Activated CD4-positive, alpha-beta T cell treated with anti-CD3 and anti-CD28 coated beads, Interleukin-2, amount 10 ng/mL, durations not matched to agents 24 days and 14 days (primary cell): ENCODE measurements at regions of chr11 and their contacts with region 1.

Region 1: GRCh38 chr11:65859200-65859811 is 927 bp upstream of the MUS81 start:
- DNase-seq: peak; percentile 99
- H3K4me3 Mint-ChIP-seq: peak overlapping the region; percentile 92
- H3K27ac Mint-ChIP-seq: peak overlapping the region; percentile 94
- H3K4me1 Mint-ChIP-seq: peaks cover 43% of the 10 kb centered on the region
- H3K27me3 Mint-ChIP-seq: no peaks in the 10 kb centered on the region

Region 2: DNA sequence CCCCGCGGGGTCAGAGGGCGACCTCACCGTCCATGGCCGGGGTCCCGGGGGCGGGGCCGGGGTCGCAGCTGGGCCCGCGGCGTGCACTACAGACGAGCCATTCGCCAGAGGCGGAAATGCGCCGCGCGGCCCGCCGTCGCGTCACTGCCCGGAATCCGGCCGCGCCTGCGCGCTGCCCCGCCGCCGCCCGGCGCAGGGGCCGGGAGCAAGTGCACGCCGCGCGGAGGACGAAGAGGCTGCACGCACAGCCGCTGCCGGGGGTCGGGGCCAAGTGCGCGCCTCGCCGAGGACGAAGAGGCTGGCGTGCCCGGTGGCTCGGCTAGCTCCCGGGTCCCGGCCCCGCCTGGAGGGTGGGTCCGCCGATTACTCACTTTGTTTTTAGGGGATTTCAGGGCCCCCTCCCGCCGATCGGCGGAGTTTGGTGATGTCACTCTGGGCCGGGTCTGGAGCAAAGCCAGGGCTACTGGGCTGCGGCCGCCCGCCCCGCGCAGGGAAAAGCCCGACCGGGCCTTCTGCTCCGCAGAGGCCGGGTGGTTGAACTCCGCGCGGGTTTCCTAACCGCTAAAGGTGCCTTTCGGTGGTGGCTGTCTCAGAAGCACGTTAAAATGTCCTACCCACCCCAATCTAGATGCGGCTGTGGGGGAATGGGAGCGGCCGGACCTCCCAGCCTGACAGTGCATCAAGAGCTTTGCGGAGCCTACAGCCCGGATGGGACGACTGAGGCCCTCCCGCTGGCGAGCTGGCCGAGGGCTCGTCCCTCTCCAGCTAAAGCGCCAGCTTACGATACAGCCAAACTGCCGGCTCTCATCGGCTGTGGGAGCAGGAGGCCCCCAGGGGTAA is 196.3 kb before region 1 on chr11 and contains the start of gene RELA:
- intact Hi-C with region 1: loop called (anchors 2 kb)
- DNase-seq: peak; percentile 97
- H3K4me3 Mint-ChIP-seq: peak within 1 kb of the TSS; percentile 92
- H3K27ac Mint-ChIP-seq: peak within 1 kb of the TSS; percentile 93
- H3K4me1 Mint-ChIP-seq: peaks cover 24% of the 10 kb centered on the region
- H3K27me3 Mint-ChIP-seq: no peaks in the 10 kb centered on the region
- total RNA-seq, gene RELA: 95.7 and 98.2 TPM in 2 replicates

Region 3: GRCh38 chr11:65720237-65720934 is 138.9 kb before region 1 on chr11 and contains the start of gene RNASEH2C:
- intact Hi-C with region 1: no loop called
- DNase-seq: peak; percentile 94
- H3K4me3 Mint-ChIP-seq: peak within 1 kb of the TSS; percentile 97
- H3K27ac Mint-ChIP-seq: peak within 1 kb of the TSS; percentile 96
- H3K4me1 Mint-ChIP-seq: peaks cover 25% of the 10 kb centered on the region
- H3K27me3 Mint-ChIP-seq: peaks cover 4% of the 10 kb centered on the region
- total RNA-seq, gene RNASEH2C: 86.4 and 100.0 TPM in 2 replicates

Region 4: GRCh38 chr11:65833297-65834030 is 25.8 kb before region 1 on chr11 and contains the start of gene SNX32:
- intact Hi-C with region 1: loop called (anchors 1 kb)
- DNase-seq: peak; percentile 99
- H3K4me3 Mint-ChIP-seq: no peak within 1 kb of the TSS
- H3K27ac Mint-ChIP-seq: no peak within 1 kb of the TSS
- H3K4me1 Mint-ChIP-seq: peaks cover 21% of the 10 kb centered on the region
- H3K27me3 Mint-ChIP-seq: peaks cover 20% of the 10 kb centered on the region
- total RNA-seq, gene SNX32: 1.2 and 2.1 TPM in 2 replicates

Region 5: GRCh38 chr11:65888163-65888814 is 29.0 kb after region 1 on chr11 and contains the start of gene FIBP:
- intact Hi-C with region 1: loop called (anchors 1 kb)
- DNase-seq: peak; percentile 98
- H3K4me3 Mint-ChIP-seq: peak within 1 kb of the TSS; percentile 95
- H3K27ac Mint-ChIP-seq: peak within 1 kb of the TSS; percentile 98
- H3K4me1 Mint-ChIP-seq: peaks cover 51% of the 10 kb centered on the region
- H3K27me3 Mint-ChIP-seq: no peaks in the 10 kb centered on the region
- total RNA-seq, gene FIBP: 91.0 and 95.7 TPM in 2 replicates

Region 6: GRCh38 chr11:65919146-65920033 is 60.1 kb after region 1 on chr11 and contains the start of gene DRAP1:
- intact Hi-C with region 1: loop called (anchors 1 kb)
- DNase-seq: peak; percentile 99
- H3K4me3 Mint-ChIP-seq: peak within 1 kb of the TSS; percentile 96
- H3K27ac Mint-ChIP-seq: peak within 1 kb of the TSS; percentile 90
- H3K4me1 Mint-ChIP-seq: peaks cover 25% of the 10 kb centered on the region
- H3K27me3 Mint-ChIP-seq: no peaks in the 10 kb centered on the region
- total RNA-seq, gene DRAP1: 113 and 117 TPM in 2 replicates

Region 7: GRCh38 chr11:65988791-65989592 is 129.7 kb after region 1 on chr11:
- intact Hi-C with region 1: loop called (anchors 1 kb)
- DNase-seq: peak; percentile 98
- H3K4me3 Mint-ChIP-seq: no peak overlapping the region
- H3K27ac Mint-ChIP-seq: peak overlapping the region; percentile 80
- H3K4me1 Mint-ChIP-seq: peaks cover 6% of the 10 kb centered on the region
- H3K27me3 Mint-ChIP-seq: no peaks in the 10 kb centered on the region

Region 8: GRCh38 chr11:66051766-66052663 is 192.7 kb after region 1 on chr11 and contains the start of gene SF3B2:
- intact Hi-C with region 1: loop called (anchors 1 kb)
- DNase-seq: peak; percentile 99
- H3K4me3 Mint-ChIP-seq: peak within 1 kb of the TSS; percentile 88
- H3K27ac Mint-ChIP-seq: peak within 1 kb of the TSS; percentile 97
- H3K4me1 Mint-ChIP-seq: peaks cover 21% of the 10 kb centered on the region
- H3K27me3 Mint-ChIP-seq: peaks cover 6% of the 10 kb centered on the region
- total RNA-seq, gene SF3B2: 283 and 284 TPM in 2 replicates

Region 9: DNA sequence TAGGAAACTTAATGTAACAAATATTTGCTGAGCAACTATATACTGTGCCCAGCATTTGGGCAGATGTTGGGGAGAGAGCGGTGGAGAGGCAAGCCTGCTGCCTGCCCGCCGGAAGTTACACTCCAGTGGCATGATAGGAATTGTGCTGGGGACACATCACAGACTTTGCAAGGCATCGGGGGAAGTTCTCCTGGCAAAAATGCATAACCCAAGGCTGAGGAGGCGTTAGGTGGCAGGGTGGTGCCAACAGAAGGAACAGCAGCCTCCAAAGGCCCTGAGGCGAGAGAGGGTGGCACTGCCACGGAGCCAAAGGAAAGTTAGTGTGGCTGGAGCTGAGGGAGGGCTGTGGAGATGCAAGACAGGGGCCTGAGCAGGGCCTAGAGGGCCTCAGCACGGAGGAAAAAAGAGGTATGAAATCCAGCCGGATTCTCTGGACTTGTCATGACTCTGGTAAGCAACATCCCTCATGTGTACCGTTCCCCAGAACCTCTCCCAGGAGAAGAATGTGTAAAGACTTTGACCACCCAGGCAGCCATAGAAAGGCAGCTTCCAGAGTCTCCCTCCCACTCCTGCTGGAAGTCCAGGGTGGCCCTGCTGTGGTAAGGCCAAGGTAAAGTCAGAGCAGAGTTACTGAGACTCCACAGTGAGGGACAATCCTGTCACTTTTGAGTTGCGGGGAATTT is 333.0 kb after region 1 on chr11:
- intact Hi-C with region 1: no loop called
- DNase-seq: no peak
- H3K4me3 Mint-ChIP-seq: no peak overlapping the region
- H3K27ac Mint-ChIP-seq: no peak overlapping the region
- H3K4me1 Mint-ChIP-seq: peaks cover 4% of the 10 kb centered on the region
- H3K27me3 Mint-ChIP-seq: no peaks in the 10 kb centered on the region